HAP-1 (cell line): ENCODE measurements at regions of chr7 and their contacts with region 1.

Region 1: GRCh38 chr7:128209229-128210035 is 31.6 kb upstream of the LEP start:
- DNase-seq: peak; percentile 64 to 78
- H3K4me3 ChIP-seq: no peak overlapping the region
- H3K4me1 ChIP-seq: no peaks in the 10 kb centered on the region
- H3K27me3 ChIP-seq: peaks cover 15% of the 10 kb centered on the region

Region 2: GRCh38 chr7:127717502-127718339 is 491.7 kb before region 1 on chr7:
- in situ Hi-C with region 1: loop called (anchors 10 kb)
- DNase-seq: no peak
- H3K4me3 ChIP-seq: no peak overlapping the region
- H3K4me1 ChIP-seq: no peaks in the 10 kb centered on the region
- H3K27me3 ChIP-seq: no peaks in the 10 kb centered on the region

Region 3: GRCh38 chr7:128121711-128122530 is 87.5 kb before region 1 on chr7:
- in situ Hi-C with region 1: no loop called
- DNase-seq: no peak
- H3K4me3 ChIP-seq: no peak overlapping the region
- H3K4me1 ChIP-seq: peaks cover 6% of the 10 kb centered on the region
- H3K27me3 ChIP-seq: peaks cover 11% of the 10 kb centered on the region